Naive thymus-derived CD4-positive, alpha-beta T cell (primary cell): ENCODE measurements at regions of chr1 and their contacts with region 1.

Region 1: DNA sequence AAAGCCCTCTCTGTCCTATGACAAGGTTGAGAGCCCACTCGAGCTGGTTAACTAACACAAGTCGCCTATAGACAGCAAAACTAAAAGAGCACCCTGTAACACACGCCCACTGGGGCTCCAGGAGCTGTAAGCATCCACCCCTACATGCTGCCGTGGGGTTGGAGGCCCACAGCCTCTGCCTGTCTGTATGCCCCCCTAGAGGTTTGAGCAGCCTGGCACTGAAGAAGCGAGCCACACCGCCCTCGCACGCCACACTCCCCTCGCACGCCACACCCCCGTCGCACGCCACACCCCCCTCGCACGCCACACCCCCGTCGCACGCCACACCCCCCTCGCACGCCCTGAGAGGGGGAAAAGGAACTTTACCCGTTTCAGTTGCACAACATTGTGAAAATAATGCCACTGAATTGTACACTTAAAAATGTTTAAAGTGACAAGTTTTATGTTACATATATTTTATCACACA is 13.2 kb upstream of the HMGCL start:
- DNase-seq: peak; percentile 61 to 81 (median 72)
- ATAC-seq: peak; percentile 100
- H3K4me3 ChIP-seq: peak overlapping the region; percentile 42
- H3K4me3 Mint-ChIP-seq: peak overlapping the region; percentile 73 to 90 (median 84)
- H3K27ac ChIP-seq: no peak overlapping the region
- H3K27ac Mint-ChIP-seq: peak overlapping the region in 4 of 9 donors; percentile 34 to 90 (median 53)
- H3K4me1 ChIP-seq: peaks cover 6% of the 10 kb centered on the region in 2 donors
- H3K4me1 Mint-ChIP-seq: peaks cover 0 to 14% (median 12%) of the 10 kb centered on the region in 7 donors
- H3K27me3 ChIP-seq: no peaks in the 10 kb centered on the region
- H3K27me3 Mint-ChIP-seq: peaks cover 0 to 32% (median 0%) of the 10 kb centered on the region in 5 donors

Region 2: GRCh38 chr1:23772049-23772853 is 66.2 kb before region 1 on chr1:
- CTCF ChIA-PET with region 1: no interaction called
- POLR2A ChIA-PET with region 1: no interaction called
- intact Hi-C with region 1: loop called in 1 of 2 experiments (anchors 1 kb)
- DNase-seq: peak; percentile 52 to 84 (median 78)
- ATAC-seq: peak; percentile 85
- H3K4me3 ChIP-seq: no peak overlapping the region
- H3K4me3 Mint-ChIP-seq: peak overlapping the region in 1 of 10 donors; percentile 17
- H3K27ac ChIP-seq: no peak overlapping the region
- H3K27ac Mint-ChIP-seq: peak overlapping the region in 4 of 9 donors; percentile 4 to 53 (median 23)
- H3K4me1 ChIP-seq: peaks cover 5 to 7% of the 10 kb centered on the region in 2 donors
- H3K4me1 Mint-ChIP-seq: peaks cover 2 to 38% (median 29%) of the 10 kb centered on the region in 7 donors
- H3K27me3 ChIP-seq: no peaks in the 10 kb centered on the region
- H3K27me3 Mint-ChIP-seq: no peaks in the 10 kb centered on the region

Region 3: GRCh38 chr1:23825076-23825761 is 13.2 kb before region 1 on chr1 and contains the start of gene HMGCL:
- CTCF ChIA-PET with region 1: no interaction called
- POLR2A ChIA-PET with region 1: interaction called, 8 read pairs
- intact Hi-C with region 1: loop called (anchors 1 kb)
- DNase-seq: peak; percentile 64 to 89 (median 81)
- ATAC-seq: peak; percentile 99
- H3K4me3 ChIP-seq: peak within 1 kb of the TSS; percentile 95
- H3K4me3 Mint-ChIP-seq: peak within 1 kb of the TSS; percentile 86 to 96 (median 94)
- H3K27ac ChIP-seq: peak within 1 kb of the TSS; percentile 95
- H3K27ac Mint-ChIP-seq: peak within 1 kb of the TSS; percentile 76 to 98 (median 96)
- H3K4me1 ChIP-seq: peaks cover 6% of the 10 kb centered on the region in 2 donors
- H3K4me1 Mint-ChIP-seq: peaks cover 11 to 33% (median 20%) of the 10 kb centered on the region in 7 donors
- H3K27me3 ChIP-seq: no peaks in the 10 kb centered on the region
- H3K27me3 Mint-ChIP-seq: peaks cover 0 to 5% (median 0%) of the 10 kb centered on the region in 5 donors
- total RNA-seq, gene HMGCL: 16.2 to 38.9 (median 27.3) TPM